Esophagus muscularis mucosa (tissue), 4 donors: ENCODE measurements at regions of chr2 and their contacts with region 1.

Region 1: GRCh38 chr2:191555092-191555742 is 122.7 kb upstream of the NABP1 start:
- DNase-seq: no peak
- H3K4me3 ChIP-seq: no peak overlapping the region
- H3K27ac ChIP-seq: no peak overlapping the region
- H3K4me1 ChIP-seq: peaks cover 0 to 9% (median 7%) of the 10 kb centered on the region in 4 donors
- H3K27me3 ChIP-seq: no peaks in the 10 kb centered on the region
- CTCF ChIP-seq: peak; percentile 64 to 69 (median 68)
- EP300 ChIP-seq: no peak
- POLR2A ChIP-seq: no peak

Region 2: GRCh38 chr2:190627448-190628412 is 927.5 kb before region 1 on chr2:
- intact Hi-C with region 1: no loop called
- DNase-seq: no peak
- H3K4me3 ChIP-seq: peak overlapping the region; percentile 52 to 67 (median 56)
- H3K27ac ChIP-seq: peak overlapping the region; percentile 79 to 84 (median 81)
- H3K4me1 ChIP-seq: peaks cover 11 to 33% (median 21%) of the 10 kb centered on the region in 4 donors
- H3K27me3 ChIP-seq: no peaks in the 10 kb centered on the region
- CTCF ChIP-seq: no peak
- EP300 ChIP-seq: no peak
- POLR2A ChIP-seq: no peak

Region 3: GRCh38 chr2:191691016-191691735 is 136.0 kb after region 1 on chr2:
- intact Hi-C with region 1: loop called (anchors 1 kb)
- DNase-seq: no peak
- H3K4me3 ChIP-seq: no peak overlapping the region
- H3K27ac ChIP-seq: no peak overlapping the region
- H3K4me1 ChIP-seq: peaks cover 0 to 21% (median 17%) of the 10 kb centered on the region in 4 donors
- H3K27me3 ChIP-seq: peaks cover 0 to 7% (median 0%) of the 10 kb centered on the region in 4 donors
- CTCF ChIP-seq: peak; percentile 75 to 79 (median 79)
- EP300 ChIP-seq: no peak
- POLR2A ChIP-seq: no peak

Region 4: DNA sequence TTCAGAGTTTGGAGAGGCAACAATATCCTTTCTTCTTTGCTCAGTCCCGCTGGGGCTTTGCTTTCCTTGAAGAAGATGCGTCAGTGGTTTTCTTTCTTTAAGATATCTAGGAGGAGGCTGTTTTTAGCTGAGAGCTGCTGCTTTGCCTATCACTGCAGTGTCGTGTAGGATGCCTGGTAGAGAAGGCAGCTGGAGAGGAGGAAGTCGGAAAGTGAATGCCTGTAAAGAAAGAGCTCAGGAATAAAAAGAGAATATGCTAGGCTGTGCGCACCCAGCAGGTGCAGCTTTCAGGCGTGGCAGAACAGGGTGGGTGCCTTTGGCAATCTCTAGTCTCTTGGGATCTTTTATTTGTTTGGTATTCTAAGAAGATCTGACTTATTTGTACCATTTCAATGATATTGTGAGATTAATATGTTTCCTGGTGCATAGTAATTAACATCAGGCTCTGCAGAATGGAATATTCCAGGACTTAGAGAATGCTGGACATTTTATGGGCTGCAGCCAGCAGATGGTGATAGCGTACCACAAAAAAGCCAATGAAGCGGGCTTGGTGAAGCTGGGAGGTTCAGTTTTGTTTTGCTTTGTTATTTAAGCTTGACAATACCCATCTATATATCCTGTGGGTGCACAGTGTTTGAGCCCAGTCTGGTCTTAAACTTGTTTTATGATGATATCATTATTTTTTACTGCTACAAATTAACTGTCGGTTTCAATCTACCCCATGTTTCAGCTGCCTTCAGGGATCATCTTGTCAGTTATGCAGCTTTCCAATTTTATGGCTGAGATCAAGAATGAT is 256.8 kb after region 1 on chr2:
- intact Hi-C with region 1: loop called (anchors 5 kb)
- DNase-seq: no peak
- H3K4me3 ChIP-seq: peak overlapping the region in 2 of 4 donors; percentile 10 to 44
- H3K27ac ChIP-seq: no peak overlapping the region
- H3K4me1 ChIP-seq: peaks cover 0 to 4% (median 2%) of the 10 kb centered on the region in 4 donors
- H3K27me3 ChIP-seq: no peaks in the 10 kb centered on the region
- CTCF ChIP-seq: peak; percentile 76 to 79 (median 78)
- EP300 ChIP-seq: no peak
- POLR2A ChIP-seq: no peak

Region 5: GRCh38 chr2:192162392-192163042 is 607.3 kb after region 1 on chr2:
- intact Hi-C with region 1: loop called (anchors 2 kb)
- DNase-seq: no peak
- H3K4me3 ChIP-seq: peak overlapping the region in 3 of 4 donors; percentile 29 to 39 (median 30)
- H3K27ac ChIP-seq: peak overlapping the region in 1 of 4 donors; percentile 16
- H3K4me1 ChIP-seq: peaks cover 8 to 11% (median 9%) of the 10 kb centered on the region in 4 donors
- H3K27me3 ChIP-seq: no peaks in the 10 kb centered on the region
- CTCF ChIP-seq: peak; percentile 85 to 98 (median 89)
- EP300 ChIP-seq: no peak
- POLR2A ChIP-seq: no peak